ENCODE measurements at regions of chr9 and their contacts with region 1.

Region 1: DNA sequence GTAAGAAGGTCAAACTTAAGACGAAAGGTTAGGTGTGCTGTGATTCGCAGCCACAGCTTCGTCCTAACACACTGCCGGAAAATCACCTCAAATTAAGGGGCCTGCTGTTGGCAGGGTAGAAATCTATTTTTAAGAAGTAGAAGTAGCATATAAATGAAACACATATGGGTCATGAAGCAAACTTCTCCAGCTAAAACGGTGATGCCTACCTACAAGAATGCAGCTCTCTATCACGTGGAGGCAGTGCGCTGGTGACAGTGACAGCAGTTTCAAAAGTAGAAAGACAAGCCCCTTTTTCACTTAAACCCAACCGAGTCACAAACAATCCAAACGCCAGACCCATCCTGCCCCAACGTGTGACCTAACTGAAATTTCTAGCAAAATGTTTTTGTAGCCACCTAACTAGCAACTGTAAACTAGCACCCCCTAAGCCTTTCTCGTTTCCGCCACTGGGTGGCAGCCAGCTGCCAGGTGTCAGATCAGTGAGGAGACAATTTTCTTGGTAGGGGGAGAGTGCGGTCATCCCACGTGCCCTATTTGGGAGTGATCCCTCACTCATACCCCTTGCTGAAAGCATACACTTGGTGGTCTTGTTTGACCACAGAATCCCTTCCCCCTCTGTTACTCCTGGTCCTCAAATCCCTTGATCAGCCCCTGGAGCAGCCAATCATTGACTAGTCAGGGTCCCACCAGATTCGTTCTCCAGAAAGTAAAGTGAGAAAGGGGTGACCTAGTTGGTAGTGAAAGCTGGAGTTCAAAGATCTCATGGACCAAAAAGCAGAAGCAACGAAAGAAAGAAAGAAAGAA is 71.8 kb upstream of the MAMDC2 start:
- DNase-seq: peak; percentile 68
- ATAC-seq: peak; percentile 71
- H3K4me3 ChIP-seq: no peak overlapping the region
- H3K27ac ChIP-seq: no peak overlapping the region
- H3K4me1 ChIP-seq: peaks cover 9% of the 10 kb centered on the region
- H3K27me3 ChIP-seq: no peaks in the 10 kb centered on the region
- CTCF ChIP-seq: peak; percentile 90
- POLR2A ChIP-seq: peak; percentile 37; the same call in 1 of the 2 replicates
- RAD21 ChIP-seq: peak; percentile 88

Region 2: DNA sequence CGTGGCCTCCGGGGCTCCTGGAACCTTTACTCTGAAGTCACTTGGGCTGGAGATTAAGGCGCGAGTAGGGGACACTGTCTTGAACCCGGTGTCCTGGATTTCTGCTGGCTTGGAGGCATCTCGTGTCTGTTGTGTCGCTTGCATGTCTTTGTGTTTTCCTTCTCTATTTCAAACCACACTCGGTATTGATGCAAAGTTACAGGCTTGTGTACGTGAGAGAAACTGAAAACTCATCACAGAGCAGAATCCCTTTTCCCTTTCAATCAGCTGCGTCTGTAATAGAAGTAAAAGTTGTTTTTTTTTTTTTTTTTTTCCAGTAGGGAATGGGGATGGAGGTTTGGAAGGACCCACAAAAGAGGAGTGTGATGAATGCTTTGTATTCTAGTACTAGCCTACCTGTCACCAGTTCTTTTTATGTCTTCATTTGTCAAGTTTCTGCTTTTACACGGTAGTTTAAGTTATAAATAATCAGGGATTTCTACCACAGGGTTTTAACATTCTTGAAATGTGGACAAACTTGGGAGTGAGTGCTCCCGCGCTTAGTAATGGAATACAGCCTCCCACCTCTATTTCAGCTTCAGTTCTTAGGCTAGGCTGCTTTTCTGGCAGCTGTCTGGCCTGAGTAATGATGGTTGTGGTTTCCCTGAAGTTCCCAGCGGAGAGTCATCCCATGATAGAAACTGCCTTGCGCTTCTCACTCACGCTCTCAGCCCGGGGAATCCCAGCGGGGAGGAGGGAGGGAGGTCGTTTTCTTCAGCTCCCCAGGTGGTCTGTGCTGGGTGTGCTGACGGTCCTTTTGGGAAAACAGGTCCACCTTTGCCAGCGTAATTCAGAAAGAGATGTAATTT is 797.0 kb before region 1 on chr9:
- CTCF ChIA-PET with region 1: interaction called, 13 read pairs
- POLR2A ChIA-PET with region 1: no interaction called
- dilution Hi-C with region 1: no loop called
- in situ Hi-C with region 1: no loop called
- intact Hi-C with region 1: no loop called
- DNase-seq: peak; percentile 98
- ATAC-seq: peak; percentile 60
- H3K4me3 ChIP-seq: peak overlapping the region; percentile 69
- H3K27ac ChIP-seq: peak overlapping the region; percentile 23
- H3K4me1 ChIP-seq: peaks cover 6% of the 10 kb centered on the region
- H3K27me3 ChIP-seq: no peaks in the 10 kb centered on the region
- CTCF ChIP-seq: no peak
- POLR2A ChIP-seq: peak; percentile 80
- RAD21 ChIP-seq: no peak; the same call in 1 of the 2 replicates

Region 3: GRCh38 chr9:70043689-70044489 is 72.0 kb after region 1 on chr9 and contains the start of gene MAMDC2:
- CTCF ChIA-PET with region 1: interaction called, 5 read pairs
- POLR2A ChIA-PET with region 1: interaction called, 3 read pairs
- dilution Hi-C with region 1: no loop called
- in situ Hi-C with region 1: no loop called
- intact Hi-C with region 1: loop called (anchors 5 kb)
- DNase-seq: peak; percentile 51
- ATAC-seq: peak; percentile 81
- H3K4me3 ChIP-seq: peak within 1 kb of the TSS; percentile 57
- H3K27ac ChIP-seq: no peak within 1 kb of the TSS
- H3K4me1 ChIP-seq: peaks cover 9% of the 10 kb centered on the region
- H3K27me3 ChIP-seq: no peaks in the 10 kb centered on the region
- CTCF ChIP-seq: no peak
- POLR2A ChIP-seq: no peak
- RAD21 ChIP-seq: no peak
- total RNA-seq, gene MAMDC2: 5.0 and 5.6 TPM in 2 replicates

Region 4: DNA sequence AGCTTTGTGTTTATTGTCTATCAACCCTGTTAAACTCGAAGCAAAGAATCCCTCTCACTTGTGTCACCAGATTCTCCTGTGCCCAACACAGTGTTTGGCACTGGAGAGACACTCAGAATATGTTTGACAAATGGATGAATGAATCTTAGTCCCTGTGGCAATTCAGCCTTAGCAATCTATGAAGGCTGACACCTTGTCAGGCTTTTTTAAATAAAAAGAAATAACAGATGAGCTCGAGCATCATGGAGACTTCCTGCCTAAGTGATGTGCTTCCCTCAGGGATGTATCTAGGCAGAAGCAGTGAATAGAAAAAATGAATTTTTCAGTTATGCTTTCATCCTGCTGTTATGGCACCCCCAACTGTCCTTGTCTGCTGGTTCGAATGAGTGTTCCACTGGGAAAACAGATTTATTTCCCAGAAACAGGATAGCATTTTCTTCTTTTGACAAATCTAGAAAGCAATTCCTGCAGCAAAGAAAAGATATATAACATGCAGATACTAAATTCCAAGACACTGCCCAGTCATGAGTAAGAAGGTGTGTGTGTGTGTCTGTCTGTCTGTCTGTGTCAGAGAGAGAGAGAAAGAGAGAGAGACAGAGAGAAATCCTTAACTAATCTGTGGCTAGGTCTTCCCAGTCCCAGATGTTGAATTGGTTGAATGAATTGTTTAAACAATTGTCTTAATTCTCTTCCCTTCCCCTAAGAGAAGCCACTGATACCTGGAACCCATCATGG is 88.5 kb after region 1 on chr9:
- CTCF ChIA-PET with region 1: no interaction called
- POLR2A ChIA-PET with region 1: no interaction called
- dilution Hi-C with region 1: no loop called
- in situ Hi-C with region 1: no loop called
- intact Hi-C with region 1: no loop called
- DNase-seq: no peak
- ATAC-seq: no peak
- H3K4me3 ChIP-seq: no peak overlapping the region
- H3K27ac ChIP-seq: no peak overlapping the region
- H3K4me1 ChIP-seq: no peaks in the 10 kb centered on the region
- H3K27me3 ChIP-seq: no peaks in the 10 kb centered on the region; the same call in none of the 2 replicates
- CTCF ChIP-seq: no peak
- POLR2A ChIP-seq: no peak
- RAD21 ChIP-seq: no peak

Region 5: DNA sequence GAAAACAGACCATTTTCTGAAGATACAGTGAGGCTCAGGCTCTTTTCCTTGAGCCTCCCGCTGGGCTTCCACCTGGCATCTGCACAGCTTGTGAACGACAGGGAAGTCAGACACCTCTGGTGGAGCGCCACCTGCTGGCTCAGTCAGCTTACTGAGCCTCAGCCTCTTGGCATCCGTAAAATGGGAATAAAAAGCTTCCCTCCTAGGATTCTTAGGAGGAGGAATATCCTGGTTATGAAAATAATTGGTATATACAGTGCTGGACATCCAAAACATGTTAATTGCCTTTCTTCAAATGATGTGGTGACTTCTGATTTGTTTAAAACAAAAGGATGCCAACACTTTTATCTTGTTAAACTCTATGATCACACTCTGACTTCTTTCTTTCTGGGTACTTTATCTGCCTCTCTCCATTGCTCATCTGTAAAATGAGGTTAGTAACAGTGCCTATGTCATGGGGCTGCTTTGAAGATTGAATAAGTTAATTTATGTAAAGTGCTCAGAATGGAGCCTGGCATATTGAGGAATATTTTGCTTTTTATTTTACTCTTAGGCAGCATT is 139.3 kb after region 1 on chr9:
- CTCF ChIA-PET with region 1: interaction called, 121 read pairs
- POLR2A ChIA-PET with region 1: no interaction called
- dilution Hi-C with region 1: no loop called
- in situ Hi-C with region 1: loop called (anchors 5 kb)
- intact Hi-C with region 1: loop called (anchors 1 kb)
- DNase-seq: peak; percentile 81
- ATAC-seq: peak; percentile 67
- H3K4me3 ChIP-seq: no peak overlapping the region
- H3K27ac ChIP-seq: no peak overlapping the region
- H3K4me1 ChIP-seq: peaks cover 7% of the 10 kb centered on the region; the same call in 1 of the 2 replicates
- H3K27me3 ChIP-seq: no peaks in the 10 kb centered on the region
- CTCF ChIP-seq: peak; percentile 83
- POLR2A ChIP-seq: no peak
- RAD21 ChIP-seq: peak; percentile 82

Region 6: GRCh38 chr9:70258692-70259511 is 287.1 kb after region 1 on chr9 and contains the start of gene SMC5:
- CTCF ChIA-PET with region 1: interaction called, 9 read pairs
- POLR2A ChIA-PET with region 1: interaction called, 3 read pairs
- dilution Hi-C with region 1: no loop called
- in situ Hi-C with region 1: no loop called
- intact Hi-C with region 1: loop called (anchors 10 kb)
- DNase-seq: peak; percentile 92
- ATAC-seq: peak; percentile 84
- H3K4me3 ChIP-seq: peak within 1 kb of the TSS; percentile 75
- H3K27ac ChIP-seq: peak within 1 kb of the TSS; percentile 97
- H3K4me1 ChIP-seq: peaks cover 26% of the 10 kb centered on the region
- H3K27me3 ChIP-seq: no peaks in the 10 kb centered on the region
- CTCF ChIP-seq: no peak
- POLR2A ChIP-seq: peak; percentile 96
- RAD21 ChIP-seq: no peak
- total RNA-seq, gene SMC5: 12.0 and 25.8 TPM in 2 replicates

Region 7: DNA sequence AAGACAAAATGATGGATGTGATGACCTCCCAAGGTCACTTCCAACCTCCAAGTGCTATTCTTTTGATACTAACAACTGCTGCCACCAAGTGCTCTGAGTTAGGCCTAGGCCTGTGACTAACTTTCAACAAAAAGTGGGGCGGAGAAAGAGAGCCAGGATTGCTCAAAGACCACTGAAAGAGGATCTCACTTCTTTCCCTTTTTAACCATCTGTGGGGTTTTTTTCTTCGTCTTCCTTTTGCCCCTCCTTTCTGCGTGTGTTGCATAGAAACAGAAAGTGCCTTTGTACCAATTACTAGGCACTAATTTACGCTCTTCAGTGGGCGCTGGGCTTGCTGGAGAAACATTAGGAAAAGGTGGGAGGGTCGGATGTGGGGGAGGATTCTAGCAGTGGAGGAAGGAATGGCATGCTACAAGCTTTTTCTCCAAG is 434.6 kb after region 1 on chr9:
- CTCF ChIA-PET with region 1: no interaction called
- POLR2A ChIA-PET with region 1: interaction called, 11 read pairs
- dilution Hi-C with region 1: no loop called
- in situ Hi-C with region 1: no loop called
- intact Hi-C with region 1: no loop called
- DNase-seq: peak; percentile 62
- ATAC-seq: no peak
- H3K4me3 ChIP-seq: no peak overlapping the region
- H3K27ac ChIP-seq: peak overlapping the region; percentile 90
- H3K4me1 ChIP-seq: peaks cover 34% of the 10 kb centered on the region
- H3K27me3 ChIP-seq: no peaks in the 10 kb centered on the region
- CTCF ChIP-seq: no peak
- POLR2A ChIP-seq: peak; percentile 13; the same call in 1 of the 2 replicates
- RAD21 ChIP-seq: no peak